Endothelial cell of umbilical vein (primary cell): ENCODE measurements at regions of chr1 and their contacts with region 1.

Region 1: DNA sequence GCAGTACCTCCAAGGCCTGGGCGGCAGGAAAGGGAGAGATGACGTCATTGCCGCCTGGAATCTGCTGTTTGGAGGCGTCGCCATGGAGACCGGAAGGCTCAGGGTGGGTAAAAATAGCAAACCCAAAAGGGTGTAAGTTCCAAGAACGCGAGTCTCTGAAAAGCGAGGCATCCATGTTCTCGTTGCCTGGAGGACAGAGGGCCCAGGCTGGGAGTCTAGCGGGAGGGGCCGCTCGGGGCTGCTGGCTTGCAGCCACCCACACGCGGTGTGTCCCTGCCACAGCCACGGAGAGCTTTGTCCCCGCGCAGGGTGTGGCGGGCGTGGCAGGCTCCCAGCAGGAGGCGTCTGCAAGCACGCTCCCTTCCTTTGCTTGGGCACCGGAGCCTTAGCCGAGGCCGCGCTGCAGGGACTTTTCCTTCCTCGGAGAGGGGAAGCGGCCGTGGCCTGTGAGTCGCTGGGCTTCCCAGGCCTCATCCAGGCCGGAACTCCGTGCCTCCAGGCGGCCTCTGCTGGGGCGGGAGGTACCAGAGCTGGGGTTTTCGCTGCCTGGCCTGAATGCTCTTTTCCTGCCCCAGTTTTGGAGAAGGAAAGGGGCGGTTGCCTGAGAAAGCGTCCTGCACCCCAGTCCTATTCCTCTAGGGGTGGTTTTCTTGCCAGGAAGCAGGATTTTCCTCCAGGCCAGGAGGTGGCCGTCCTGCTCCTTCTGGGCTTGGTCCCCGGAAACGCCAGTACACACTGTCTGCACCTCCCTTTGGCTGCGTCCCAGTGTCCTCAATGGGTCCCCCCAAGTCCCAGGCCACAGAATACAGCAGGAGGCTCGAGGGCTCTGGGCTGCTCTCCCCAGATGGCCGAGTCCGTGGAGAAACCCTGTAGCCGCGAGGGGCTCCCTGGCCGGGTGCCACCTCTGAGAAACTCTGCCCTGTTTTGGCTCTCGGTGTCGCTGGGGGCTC is 15.3 kb upstream of the SKI start:
- DNase-seq: peak; percentile 97
- H3K4me3 ChIP-seq: peak overlapping the region in 2 of 3 experiments; percentile 2 to 27
- H3K27ac ChIP-seq: peak overlapping the region; percentile 98
- H3K4me1 ChIP-seq: peaks cover 37% of the 10 kb centered on the region
- H3K27me3 ChIP-seq: no peaks in the 10 kb centered on the region
- CTCF ChIP-seq: peak; percentile 21 to 25
- POLR2A ChIP-seq: peak; percentile 71

Region 2: GRCh38 chr1:1847061-1847850 is 365.6 kb before region 1 on chr1:
- CTCF ChIA-PET with region 1: no interaction called
- POLR2A ChIA-PET with region 1: no interaction called
- dilution Hi-C with region 1: no loop called
- intact Hi-C with region 1: no loop called
- DNase-seq: peak; percentile 85
- H3K4me3 ChIP-seq: no peak overlapping the region
- H3K27ac ChIP-seq: peak overlapping the region; percentile 10
- H3K4me1 ChIP-seq: peaks cover 9% of the 10 kb centered on the region
- H3K27me3 ChIP-seq: no peaks in the 10 kb centered on the region
- CTCF ChIP-seq: no peak
- POLR2A ChIP-seq: no peak

Region 3: DNA sequence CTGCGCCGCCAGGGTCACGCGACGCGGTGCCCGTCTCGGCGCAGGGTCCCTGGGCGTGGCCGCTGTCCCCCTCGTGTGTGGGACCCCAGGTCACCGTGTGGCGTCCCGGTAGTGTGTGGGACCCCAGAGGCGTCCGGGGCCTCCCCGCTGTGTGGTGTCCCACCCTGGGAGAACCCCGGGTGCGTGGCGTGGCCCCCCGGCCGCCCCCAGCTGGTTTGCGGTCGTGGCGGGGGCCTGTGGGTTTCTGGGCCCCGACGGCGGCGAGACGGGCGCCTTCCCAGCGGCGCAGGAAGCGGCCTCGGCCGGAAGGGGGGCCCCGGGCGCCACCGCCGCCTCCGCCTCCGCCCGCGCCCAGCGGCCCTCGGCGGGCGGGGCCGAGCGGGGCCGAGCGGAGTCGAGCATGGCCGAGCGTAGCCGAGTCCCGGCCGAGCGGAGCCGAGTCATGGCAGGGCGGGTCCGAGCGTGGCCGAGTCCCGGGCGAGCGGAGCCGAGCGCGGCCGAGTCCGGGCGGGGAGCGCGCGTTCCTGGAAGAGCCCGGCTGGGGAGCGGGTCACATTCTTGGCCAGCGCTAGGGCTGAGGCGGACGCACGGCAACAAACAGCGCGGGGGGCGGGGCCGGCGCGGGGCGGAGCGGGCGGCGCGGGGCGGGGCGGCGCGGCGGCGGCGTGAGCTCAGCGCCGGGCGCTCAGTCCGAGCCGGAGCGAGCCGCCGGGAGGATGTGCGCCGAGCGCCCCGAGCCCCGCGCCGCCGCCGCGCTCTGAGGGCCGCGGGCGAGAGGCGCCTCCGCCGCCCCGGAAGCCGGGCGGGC is 14.7 kb after region 1 on chr1:
- CTCF ChIA-PET with region 1: interaction called, 8 read pairs
- POLR2A ChIA-PET with region 1: interaction called, 12 read pairs
- dilution Hi-C with region 1: no loop called
- intact Hi-C with region 1: loop called (anchors 1 kb)
- DNase-seq: peak; percentile 92
- H3K4me3 ChIP-seq: peak overlapping the region in 2 of 3 experiments; percentile 63 to 95
- H3K27ac ChIP-seq: peak overlapping the region; percentile 98
- H3K4me1 ChIP-seq: peaks cover 20% of the 10 kb centered on the region
- H3K27me3 ChIP-seq: no peaks in the 10 kb centered on the region
- CTCF ChIP-seq: no peak
- POLR2A ChIP-seq: peak; percentile 16

Region 4: GRCh38 chr1:2290595-2291510 is 78.0 kb after region 1 on chr1:
- CTCF ChIA-PET with region 1: no interaction called
- POLR2A ChIA-PET with region 1: no interaction called
- dilution Hi-C with region 1: no loop called
- intact Hi-C with region 1: loop called (anchors 1 kb)
- DNase-seq: peak; percentile 94
- H3K4me3 ChIP-seq: peak overlapping the region in 1 of 3 experiments; percentile 39
- H3K27ac ChIP-seq: peak overlapping the region; percentile 87
- H3K4me1 ChIP-seq: peaks cover 29% of the 10 kb centered on the region
- H3K27me3 ChIP-seq: no peaks in the 10 kb centered on the region
- CTCF ChIP-seq: no peak
- POLR2A ChIP-seq: peak; percentile 22

Region 5: GRCh38 chr1:2300851-2301606 is 88.2 kb after region 1 on chr1:
- CTCF ChIA-PET with region 1: no interaction called
- POLR2A ChIA-PET with region 1: no interaction called
- dilution Hi-C with region 1: loop called (anchors 10 kb)
- intact Hi-C with region 1: no loop called
- DNase-seq: peak; percentile 62
- H3K4me3 ChIP-seq: no peak overlapping the region
- H3K27ac ChIP-seq: peak overlapping the region; percentile 83
- H3K4me1 ChIP-seq: peaks cover 27% of the 10 kb centered on the region
- H3K27me3 ChIP-seq: no peaks in the 10 kb centered on the region
- CTCF ChIP-seq: no peak
- POLR2A ChIP-seq: peak; percentile 21

Region 6: GRCh38 chr1:2314803-2315673 is 102.2 kb after region 1 on chr1:
- CTCF ChIA-PET with region 1: interaction called, 5 read pairs
- POLR2A ChIA-PET with region 1: no interaction called
- dilution Hi-C with region 1: no loop called
- intact Hi-C with region 1: loop called (anchors 5 kb)
- DNase-seq: peak; percentile 29
- H3K4me3 ChIP-seq: peak overlapping the region in 1 of 3 experiments; percentile 54
- H3K27ac ChIP-seq: no peak overlapping the region
- H3K4me1 ChIP-seq: peaks cover 7% of the 10 kb centered on the region
- H3K27me3 ChIP-seq: no peaks in the 10 kb centered on the region
- CTCF ChIP-seq: peak; percentile 44 to 72
- POLR2A ChIP-seq: no peak